ENCODE measurements at regions of chr6 and their contacts with region 1.

Region 1: GRCh38 chr6:151675746-151676416 is 131.6 kb upstream of the ESR1 start:
- DNase-seq: peak; percentile 69
- H3K4me3 Mint-ChIP-seq: no peak overlapping the region
- H3K27ac Mint-ChIP-seq: no peak overlapping the region
- H3K4me1 Mint-ChIP-seq: peaks cover 8% of the 10 kb centered on the region
- H3K27me3 Mint-ChIP-seq: no peaks in the 10 kb centered on the region

Region 2: GRCh38 chr6:151589667-151590066 is 86.2 kb before region 1 on chr6:
- CTCF ChIA-PET with region 1: no interaction called
- intact Hi-C with region 1: no loop called
- DNase-seq: no peak
- H3K4me3 Mint-ChIP-seq: no peak overlapping the region
- H3K27ac Mint-ChIP-seq: no peak overlapping the region
- H3K4me1 Mint-ChIP-seq: no peaks in the 10 kb centered on the region
- H3K27me3 Mint-ChIP-seq: peaks cover 25% of the 10 kb centered on the region

Region 3: DNA sequence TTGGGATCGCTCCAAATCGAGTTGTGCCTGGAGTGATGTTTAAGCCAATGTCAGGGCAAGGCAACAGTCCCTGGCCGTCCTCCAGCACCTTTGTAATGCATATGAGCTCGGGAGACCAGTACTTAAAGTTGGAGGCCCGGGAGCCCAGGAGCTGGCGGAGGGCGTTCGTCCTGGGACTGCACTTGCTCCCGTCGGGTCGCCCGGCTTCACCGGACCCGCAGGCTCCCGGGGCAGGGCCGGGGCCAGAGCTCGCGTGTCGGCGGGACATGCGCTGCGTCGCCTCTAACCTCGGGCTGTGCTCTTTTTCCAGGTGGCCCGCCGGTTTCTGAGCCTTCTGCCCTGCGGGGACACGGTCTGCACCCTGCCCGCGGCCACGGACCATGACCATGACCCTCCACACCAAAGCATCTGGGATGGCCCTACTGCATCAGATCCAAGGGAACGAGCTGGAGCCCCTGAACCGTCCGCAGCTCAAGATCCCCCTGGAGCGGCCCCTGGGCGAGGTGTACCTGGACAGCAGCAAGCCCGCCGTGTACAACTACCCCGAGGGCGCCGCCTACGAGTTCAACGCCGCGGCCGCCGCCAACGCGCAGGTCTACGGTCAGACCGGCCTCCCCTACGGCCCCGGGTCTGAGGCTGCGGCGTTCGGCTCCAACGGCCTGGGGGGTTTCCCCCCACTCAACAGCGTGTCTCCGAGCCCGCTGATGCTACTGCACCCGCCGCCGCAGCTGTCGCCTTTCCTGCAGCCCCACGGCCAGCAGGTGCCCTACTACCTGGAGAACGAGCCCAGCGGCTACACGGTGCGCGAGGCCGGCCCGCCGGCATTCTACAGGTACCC is 131.9 kb after region 1 on chr6 and contains the start of gene ESR1:
- CTCF ChIA-PET with region 1: no interaction called
- intact Hi-C with region 1: loop called (anchors 5 kb)
- DNase-seq: peak; percentile 26
- H3K4me3 Mint-ChIP-seq: peak within 1 kb of the TSS; percentile 69
- H3K27ac Mint-ChIP-seq: no peak within 1 kb of the TSS
- H3K4me1 Mint-ChIP-seq: peaks cover 13% of the 10 kb centered on the region
- H3K27me3 Mint-ChIP-seq: peaks cover 43% of the 10 kb centered on the region
- total RNA-seq, gene ESR1: 0.52 to 0.54 TPM

Region 4: DNA sequence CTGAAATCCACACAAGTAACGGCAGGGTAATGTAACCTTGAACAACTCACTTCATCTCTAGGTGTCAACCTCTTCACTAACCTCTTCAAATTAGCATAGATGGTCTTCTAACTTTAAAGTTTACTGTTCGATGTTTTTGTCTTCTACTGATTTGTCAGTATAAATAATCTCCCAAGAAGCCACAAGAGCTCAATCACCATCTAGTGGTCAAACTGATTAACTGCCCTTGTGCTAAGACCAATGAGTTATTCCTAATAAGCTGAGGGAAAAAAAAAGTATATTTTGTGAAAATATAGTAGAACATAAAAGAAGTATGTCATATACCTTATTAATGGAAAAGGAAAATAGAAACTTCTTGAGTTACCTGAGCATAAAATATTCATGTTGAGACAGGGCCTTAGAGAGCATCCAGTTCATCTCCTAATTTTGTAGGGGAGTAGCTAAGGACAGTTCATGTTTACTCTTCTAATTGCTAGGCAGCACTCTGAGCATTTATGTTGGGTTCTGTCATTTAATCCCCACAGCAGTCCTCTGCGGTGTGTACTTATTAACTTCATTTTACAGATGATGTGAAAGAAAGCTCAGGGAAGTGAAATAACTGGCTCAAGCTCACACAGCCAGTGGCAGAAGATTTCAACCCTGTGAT is 448.7 kb after region 1 on chr6:
- CTCF ChIA-PET with region 1: interaction called, 9 read pairs
- intact Hi-C with region 1: loop called (anchors 1 kb)
- DNase-seq: no peak
- H3K4me3 Mint-ChIP-seq: no peak overlapping the region
- H3K27ac Mint-ChIP-seq: peak overlapping the region; percentile 39
- H3K4me1 Mint-ChIP-seq: no peaks in the 10 kb centered on the region
- H3K27me3 Mint-ChIP-seq: no peaks in the 10 kb centered on the region

Region 5: GRCh38 chr6:152244998-152245630 is 569.2 kb after region 1 on chr6:
- CTCF ChIA-PET with region 1: no interaction called
- intact Hi-C with region 1: no loop called
- DNase-seq: no peak
- H3K4me3 Mint-ChIP-seq: no peak overlapping the region
- H3K27ac Mint-ChIP-seq: no peak overlapping the region
- H3K4me1 Mint-ChIP-seq: no peaks in the 10 kb centered on the region
- H3K27me3 Mint-ChIP-seq: no peaks in the 10 kb centered on the region

Region 6: DNA sequence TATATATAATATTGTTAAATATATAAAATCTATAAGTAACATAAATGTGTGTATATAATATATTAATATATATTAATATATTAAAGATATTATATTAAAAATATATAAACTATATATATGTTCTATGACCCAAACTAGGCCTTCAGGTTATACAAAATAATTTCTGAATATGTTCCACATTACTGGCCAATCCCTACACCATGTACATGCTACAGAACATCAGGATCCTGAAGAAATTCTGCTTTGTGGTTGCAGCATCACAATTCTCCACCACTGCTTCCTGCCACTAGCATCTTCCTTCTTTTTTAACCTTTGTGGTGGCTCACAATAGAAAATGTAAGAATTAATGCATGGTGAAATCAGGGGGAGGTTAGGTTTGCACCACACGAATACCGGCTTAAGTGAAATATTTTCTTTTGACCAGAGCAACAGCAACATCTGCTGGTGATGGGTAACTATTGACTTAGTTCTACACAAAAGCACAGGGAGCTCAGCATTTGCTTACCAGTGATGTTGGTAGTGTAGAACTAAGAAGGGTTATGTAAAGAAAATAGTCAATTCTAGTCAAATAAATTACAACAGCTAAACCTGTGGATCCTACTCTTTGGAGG is 680.7 kb after region 1 on chr6:
- CTCF ChIA-PET with region 1: no interaction called
- intact Hi-C with region 1: loop called (anchors 1 kb)
- DNase-seq: peak; percentile 16
- H3K4me3 Mint-ChIP-seq: no peak overlapping the region
- H3K27ac Mint-ChIP-seq: no peak overlapping the region
- H3K4me1 Mint-ChIP-seq: peaks cover 2% of the 10 kb centered on the region
- H3K27me3 Mint-ChIP-seq: no peaks in the 10 kb centered on the region

Region 7: DNA sequence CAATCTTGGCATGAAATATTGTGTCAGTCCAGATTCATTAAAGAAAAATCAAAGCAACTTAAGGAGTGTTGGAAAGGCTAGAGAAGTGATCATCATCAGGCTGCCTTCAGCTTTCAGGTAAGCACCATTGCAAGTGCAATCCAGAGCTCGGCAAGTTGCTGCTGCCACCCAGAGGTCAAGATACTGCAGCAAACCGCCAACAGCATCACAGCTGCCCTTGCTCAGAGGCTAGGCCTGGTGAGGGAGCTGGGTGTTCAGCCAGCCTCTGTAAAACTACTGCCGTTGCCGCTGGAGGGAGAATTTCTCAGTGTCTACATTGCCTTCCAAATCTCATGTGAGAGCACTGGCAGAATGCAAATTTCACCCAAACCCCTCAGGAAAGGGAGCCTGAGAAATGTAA is 967.1 kb after region 1 on chr6:
- CTCF ChIA-PET with region 1: no interaction called
- intact Hi-C with region 1: loop called (anchors 10 kb)
- DNase-seq: peak; percentile 56
- H3K4me3 Mint-ChIP-seq: no peak overlapping the region
- H3K27ac Mint-ChIP-seq: no peak overlapping the region
- H3K4me1 Mint-ChIP-seq: no peaks in the 10 kb centered on the region
- H3K27me3 Mint-ChIP-seq: peaks cover 13% of the 10 kb centered on the region

Region 8: DNA sequence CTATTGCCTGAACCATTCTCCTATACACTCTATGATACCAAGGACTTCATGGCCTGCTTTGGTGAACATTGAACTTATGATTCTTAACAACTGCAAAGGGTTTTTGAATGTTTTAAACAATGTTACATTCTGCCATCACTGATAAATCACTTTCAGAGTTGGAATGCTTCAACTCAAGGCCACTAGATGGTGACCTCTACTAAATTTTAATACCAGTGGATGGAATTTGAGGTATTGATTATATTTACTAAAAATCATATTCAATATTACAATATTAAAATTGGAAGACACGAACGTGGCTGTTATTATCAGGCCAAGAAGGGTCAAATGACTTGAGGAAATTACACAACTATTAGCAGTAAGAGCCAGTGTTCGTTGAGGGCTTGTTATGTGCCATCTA is 1040.4 kb after region 1 on chr6:
- CTCF ChIA-PET with region 1: no interaction called
- intact Hi-C with region 1: no loop called
- DNase-seq: no peak
- H3K4me3 Mint-ChIP-seq: no peak overlapping the region
- H3K27ac Mint-ChIP-seq: no peak overlapping the region
- H3K4me1 Mint-ChIP-seq: no peaks in the 10 kb centered on the region
- H3K27me3 Mint-ChIP-seq: peaks cover 2% of the 10 kb centered on the region

Measured in activated naive CD4-positive, alpha-beta T cell treated with anti-CD3 and anti-CD28 coated beads for 36 hours (primary cell).